Activated CD8-positive, alpha-beta T cell treated with anti-CD3 and anti-CD28 coated beads, Interleukin-2, amount 10 ng/mL, durations not matched to agents 7 days and 5 days (primary cell): ENCODE measurements at regions of chr19 and their contacts with region 1.

Region 1: DNA sequence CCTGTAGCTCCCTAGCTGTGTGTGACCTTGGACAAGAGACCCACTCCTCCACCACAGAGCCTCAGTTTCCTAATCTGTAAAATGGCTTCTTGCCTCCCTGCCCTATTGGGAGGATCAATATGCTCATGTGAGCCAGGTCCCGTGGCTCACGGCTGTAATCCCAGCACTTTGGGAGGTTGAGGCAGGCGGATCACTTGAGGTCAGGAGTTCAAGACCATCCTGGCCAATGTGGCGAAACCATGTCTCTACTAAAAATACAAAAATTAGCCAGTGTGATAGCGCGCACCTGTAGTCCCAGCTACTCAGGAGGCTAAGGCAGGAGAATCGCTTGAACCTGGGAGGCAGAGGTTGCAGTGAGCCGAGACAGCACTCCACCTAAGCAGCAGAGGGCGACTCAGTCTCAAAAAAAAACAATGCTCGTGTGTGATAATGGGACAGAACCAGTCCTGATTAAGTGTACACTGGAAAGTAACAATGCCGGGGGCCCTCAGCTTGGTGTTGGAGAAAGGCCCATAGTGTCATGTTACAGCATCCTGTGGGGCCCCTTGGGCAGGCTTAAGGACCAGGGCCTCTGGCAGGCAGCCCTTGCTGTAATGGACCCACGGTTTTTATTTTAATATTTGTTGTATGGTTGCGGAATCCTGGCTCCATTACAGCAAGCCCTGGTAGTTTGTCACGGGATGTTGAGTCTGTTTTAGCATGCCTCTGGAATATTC is 6.8 kb downstream of the RPS11 start:
- DNase-seq: peak; percentile 62
- ATAC-seq: no peak
- H3K4me3 Mint-ChIP-seq: no peak overlapping the region
- H3K27ac Mint-ChIP-seq: peak overlapping the region; percentile 43
- H3K4me1 Mint-ChIP-seq: peaks cover 49% of the 10 kb centered on the region
- H3K27me3 Mint-ChIP-seq: no peaks in the 10 kb centered on the region

Region 2: DNA sequence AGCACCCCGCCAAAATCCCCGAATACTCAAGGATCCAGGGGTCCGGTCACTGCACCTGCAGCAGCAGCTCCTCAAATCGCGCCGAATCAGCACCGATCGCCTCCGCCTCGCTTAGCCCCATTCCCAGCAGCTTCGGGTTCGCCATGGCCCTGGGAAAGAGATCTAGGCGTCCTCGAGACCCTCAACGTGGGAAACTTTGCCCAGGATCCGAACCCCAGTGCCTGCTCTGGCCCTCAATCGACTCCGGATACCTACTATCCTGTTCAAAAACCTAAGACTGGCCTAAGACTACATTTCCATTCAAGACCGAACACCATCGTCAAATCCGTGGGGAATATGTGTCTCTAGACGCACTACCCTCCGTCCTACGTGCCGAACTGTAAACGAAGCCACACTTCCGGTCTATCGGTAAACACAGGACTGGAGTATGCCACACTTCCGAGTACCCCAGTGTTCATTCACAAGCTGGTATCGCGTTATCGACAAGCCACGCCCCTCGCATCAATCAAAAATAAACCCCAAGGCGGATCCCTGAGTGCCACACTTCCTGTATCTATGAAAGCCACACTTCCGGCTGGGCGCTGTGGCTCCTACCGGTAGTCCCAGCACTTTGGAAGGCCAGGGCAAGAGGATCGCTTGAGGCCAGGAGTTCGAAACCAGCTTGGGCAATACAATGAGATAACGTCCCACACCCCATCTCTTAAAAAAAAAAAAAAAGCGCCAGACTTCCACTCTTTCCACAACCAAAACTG is 51.4 kb before region 1 on chr19 and contains the start of gene PIH1D1:
- CTCF ChIA-PET with region 1: no interaction called
- POLR2A ChIA-PET with region 1: no interaction called
- DNase-seq: peak; percentile 99
- ATAC-seq: peak; percentile 67
- H3K4me3 Mint-ChIP-seq: peak within 1 kb of the TSS; percentile 93
- H3K27ac Mint-ChIP-seq: peak within 1 kb of the TSS; percentile 100
- H3K4me1 Mint-ChIP-seq: peaks cover 62% of the 10 kb centered on the region
- H3K27me3 Mint-ChIP-seq: no peaks in the 10 kb centered on the region
- total RNA-seq, gene PIH1D1: 128 to 129 TPM

Region 3: DNA sequence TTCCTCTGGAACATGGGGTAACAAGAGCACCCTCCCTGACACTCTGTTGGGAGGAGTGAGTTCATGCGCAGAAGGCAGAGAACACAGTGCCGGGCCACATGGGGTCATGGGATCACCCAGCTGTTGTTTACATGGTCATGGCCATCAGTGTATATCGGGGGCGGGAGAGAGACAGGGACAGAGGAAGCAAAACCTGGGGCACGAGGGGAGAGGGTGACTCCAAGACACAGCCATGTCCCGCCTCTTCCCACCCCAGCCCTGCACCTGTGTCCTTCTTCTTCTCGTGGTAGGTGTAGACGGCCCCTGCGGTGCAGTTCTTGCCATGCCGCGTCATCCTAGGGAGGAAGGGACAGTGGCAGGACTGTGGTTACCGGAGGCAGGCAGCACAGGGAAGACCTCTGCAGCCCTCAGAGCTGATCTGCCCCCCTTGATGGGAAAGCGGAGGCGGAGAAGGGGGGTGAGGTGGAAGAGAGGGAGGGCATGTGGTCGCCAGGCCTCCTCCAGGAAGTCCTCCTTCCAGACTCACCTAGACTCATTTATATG is 57.4 kb after region 1 on chr19:
- CTCF ChIA-PET with region 1: interaction called, 11 read pairs
- POLR2A ChIA-PET with region 1: interaction called, 4 read pairs
- DNase-seq: peak; percentile 51
- ATAC-seq: peak; percentile 20
- H3K4me3 Mint-ChIP-seq: peak overlapping the region; percentile 83
- H3K27ac Mint-ChIP-seq: peak overlapping the region; percentile 89
- H3K4me1 Mint-ChIP-seq: peaks cover 86% of the 10 kb centered on the region
- H3K27me3 Mint-ChIP-seq: no peaks in the 10 kb centered on the region